PC-3 (cell line): ENCODE measurements at regions of chr7 and their contacts with region 1.

Region 1: GRCh38 chr7:133853706-133854276 is 273.3 kb upstream of the LRGUK start:
- DNase-seq: peak; percentile 92
- ATAC-seq: peak; percentile 91
- H3K4me3 ChIP-seq: no peak overlapping the region
- H3K27ac ChIP-seq: peak overlapping the region; percentile 74
- H3K4me1 ChIP-seq: peaks cover 17% of the 10 kb centered on the region
- H3K27me3 ChIP-seq: no peaks in the 10 kb centered on the region
- CTCF ChIP-seq: peak; percentile 83

Region 2: DNA sequence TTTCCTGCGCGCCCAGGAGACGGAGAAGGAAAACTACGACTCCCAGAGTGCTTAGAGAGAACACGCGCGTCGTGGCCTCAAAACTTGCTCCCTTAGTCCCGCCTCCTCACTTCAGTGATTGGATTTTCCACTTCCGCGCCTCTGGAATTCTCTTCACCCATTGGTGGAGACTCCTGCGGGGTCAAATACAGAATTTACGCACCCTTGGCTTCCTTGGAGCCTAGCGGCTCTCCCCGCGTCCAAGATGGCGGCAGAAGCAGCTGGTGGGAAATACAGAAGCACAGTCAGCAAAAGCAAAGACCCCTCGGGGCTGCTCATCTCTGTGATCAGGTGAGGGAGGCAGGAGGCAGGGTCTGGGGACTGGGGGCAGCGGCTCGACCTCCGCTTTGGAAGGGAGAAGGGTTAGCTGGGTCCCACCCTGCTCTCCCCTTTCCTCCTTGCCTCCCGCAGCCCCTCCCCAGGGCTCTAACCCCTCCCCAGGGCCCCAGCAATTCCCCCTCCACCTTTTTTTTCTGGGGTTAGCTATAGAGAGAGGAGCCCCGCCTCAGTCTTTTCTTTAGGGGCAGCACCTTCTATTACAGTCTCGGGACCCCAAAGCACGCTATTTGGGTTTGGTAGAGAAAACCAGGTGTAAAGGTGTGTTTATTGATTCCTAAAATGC is 600.8 kb before region 1 on chr7 and contains the start of gene EXOC4:
- CTCF ChIA-PET with region 1: no interaction called
- POLR2A ChIA-PET with region 1: no interaction called
- intact Hi-C with region 1: loop called (anchors 10 kb)
- DNase-seq: peak; percentile 97
- ATAC-seq: peak; percentile 99
- H3K4me3 ChIP-seq: peak within 1 kb of the TSS; percentile 99
- H3K27ac ChIP-seq: peak within 1 kb of the TSS; percentile 19; the same call in 1 of the 2 replicates
- H3K4me1 ChIP-seq: peaks cover 5% of the 10 kb centered on the region; the same call in 1 of the 2 replicates
- H3K27me3 ChIP-seq: no peaks in the 10 kb centered on the region
- CTCF ChIP-seq: no peak
- total RNA-seq, gene EXOC4: 43.5 and 45.8 TPM in 2 replicates

Region 3: GRCh38 chr7:133564484-133564883 is 289.3 kb before region 1 on chr7:
- CTCF ChIA-PET with region 1: no interaction called
- POLR2A ChIA-PET with region 1: no interaction called
- intact Hi-C with region 1: loop called (anchors 10 kb)
- DNase-seq: peak; percentile 9
- ATAC-seq: no peak
- H3K4me3 ChIP-seq: no peak overlapping the region
- H3K27ac ChIP-seq: no peak overlapping the region
- H3K4me1 ChIP-seq: peaks cover 8% of the 10 kb centered on the region; the same call in 1 of the 2 replicates
- H3K27me3 ChIP-seq: no peaks in the 10 kb centered on the region
- CTCF ChIP-seq: peak; percentile 63

Region 4: GRCh38 chr7:133691727-133692610 is 161.8 kb before region 1 on chr7:
- CTCF ChIA-PET with region 1: no interaction called
- POLR2A ChIA-PET with region 1: no interaction called
- intact Hi-C with region 1: loop called (anchors 10 kb)
- DNase-seq: no peak
- ATAC-seq: no peak
- H3K4me3 ChIP-seq: no peak overlapping the region
- H3K27ac ChIP-seq: no peak overlapping the region
- H3K4me1 ChIP-seq: 0 out of 2 replicates have a peak, but pooled peaks cover 5% of the 10 kb centered on the region
- H3K27me3 ChIP-seq: no peaks in the 10 kb centered on the region
- CTCF ChIP-seq: no peak

Region 5: GRCh38 chr7:133985300-133985699 is 131.5 kb after region 1 on chr7:
- CTCF ChIA-PET with region 1: no interaction called
- POLR2A ChIA-PET with region 1: no interaction called
- intact Hi-C with region 1: loop called (anchors 2 kb)
- DNase-seq: no peak
- ATAC-seq: no peak
- H3K4me3 ChIP-seq: no peak overlapping the region
- H3K27ac ChIP-seq: no peak overlapping the region
- H3K4me1 ChIP-seq: no peaks in the 10 kb centered on the region
- H3K27me3 ChIP-seq: no peaks in the 10 kb centered on the region
- CTCF ChIP-seq: no peak